ENCODE measurements at regions of chr16 and their contacts with region 1.

Region 1: DNA sequence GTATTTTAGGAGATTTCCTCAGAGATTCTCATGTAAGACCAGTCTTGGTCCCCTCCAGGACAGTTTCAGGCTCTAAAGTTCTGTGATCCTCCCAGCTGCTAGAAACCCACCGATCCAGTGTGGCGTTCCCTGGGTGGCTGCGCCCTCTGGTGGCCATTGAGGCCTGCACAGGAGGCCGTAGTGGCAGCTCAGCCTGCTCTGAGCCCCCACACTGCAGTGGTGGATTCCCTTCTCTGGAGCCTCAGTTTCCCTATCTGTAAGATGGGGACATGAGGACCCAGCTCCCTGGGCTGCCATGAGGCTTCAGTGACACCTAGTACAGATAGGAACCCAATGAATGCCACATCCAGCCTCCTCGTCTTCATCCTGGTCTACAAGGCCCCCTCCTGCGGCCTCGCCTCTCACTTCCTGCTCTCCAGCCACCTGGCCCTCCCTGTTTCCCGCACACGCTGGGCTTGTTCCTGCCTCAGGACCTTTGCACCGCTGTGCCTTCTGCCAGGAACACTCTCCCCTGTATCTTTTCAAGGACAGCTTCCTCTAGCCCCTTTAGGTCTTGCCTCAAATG is 16.5 kb downstream of the CCDC102A start:
- H3K4me3 ChIP-seq: no peak overlapping the region
- H3K27ac ChIP-seq: no peak overlapping the region
- H3K4me1 ChIP-seq: no peaks in the 10 kb centered on the region
- CTCF ChIP-seq: peak; percentile 85

Region 2: DNA sequence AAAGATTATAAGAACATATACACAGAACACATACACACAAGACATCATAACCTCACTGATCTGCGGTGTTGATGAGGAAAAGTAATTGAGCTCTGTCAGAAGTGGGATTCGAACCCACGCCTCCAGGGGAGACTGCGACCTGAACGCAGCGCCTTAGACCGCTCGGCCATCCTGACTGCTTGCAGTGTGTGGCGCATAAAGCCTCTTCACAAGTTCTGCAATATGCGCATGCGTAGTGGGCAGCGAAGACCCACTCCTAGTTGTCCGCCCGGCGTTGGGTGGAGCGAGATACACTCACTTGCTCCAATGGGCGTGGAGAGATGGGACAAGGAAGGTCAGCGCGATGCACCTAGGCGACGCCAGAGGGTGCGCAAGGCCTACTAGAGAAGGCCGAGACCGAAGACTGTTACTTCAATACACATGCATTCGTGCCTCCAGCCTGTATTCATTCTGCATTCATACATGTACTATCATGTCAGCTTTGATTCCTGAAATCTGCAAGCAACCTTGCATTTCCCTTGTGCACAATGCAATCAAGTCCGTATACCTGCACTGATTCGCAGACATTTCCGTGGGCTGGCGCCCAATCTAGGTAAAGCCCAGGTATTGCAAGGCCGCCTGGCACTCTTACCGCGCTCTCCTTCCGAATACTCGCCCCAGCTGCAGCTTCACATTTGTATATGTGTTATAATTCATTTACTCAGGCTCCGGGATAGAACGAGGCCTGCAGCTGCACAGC is 219.3 kb before region 1 on chr16:
- CTCF ChIA-PET with region 1: interaction called, 17 read pairs
- POLR2A ChIA-PET with region 1: no interaction called
- H3K4me3 ChIP-seq: peak overlapping the region; percentile 38
- H3K27ac ChIP-seq: no peak overlapping the region
- H3K4me1 ChIP-seq: no peaks in the 10 kb centered on the region
- CTCF ChIP-seq: peak; percentile 99

Region 3: GRCh38 chr16:57422026-57422944 is 97.6 kb before region 1 on chr16:
- CTCF ChIA-PET with region 1: interaction called, 86 read pairs
- POLR2A ChIA-PET with region 1: interaction called, 3 read pairs
- H3K4me3 ChIP-seq: no peak overlapping the region
- H3K27ac ChIP-seq: no peak overlapping the region
- H3K4me1 ChIP-seq: no peaks in the 10 kb centered on the region
- CTCF ChIP-seq: peak; percentile 74

Region 4: GRCh38 chr16:57475711-57476339 is 44.1 kb before region 1 on chr16:
- CTCF ChIA-PET with region 1: interaction called, 20 read pairs
- POLR2A ChIA-PET with region 1: no interaction called
- H3K4me3 ChIP-seq: no peak overlapping the region
- H3K27ac ChIP-seq: no peak overlapping the region
- H3K4me1 ChIP-seq: no peaks in the 10 kb centered on the region
- CTCF ChIP-seq: peak; percentile 92

Region 5: DNA sequence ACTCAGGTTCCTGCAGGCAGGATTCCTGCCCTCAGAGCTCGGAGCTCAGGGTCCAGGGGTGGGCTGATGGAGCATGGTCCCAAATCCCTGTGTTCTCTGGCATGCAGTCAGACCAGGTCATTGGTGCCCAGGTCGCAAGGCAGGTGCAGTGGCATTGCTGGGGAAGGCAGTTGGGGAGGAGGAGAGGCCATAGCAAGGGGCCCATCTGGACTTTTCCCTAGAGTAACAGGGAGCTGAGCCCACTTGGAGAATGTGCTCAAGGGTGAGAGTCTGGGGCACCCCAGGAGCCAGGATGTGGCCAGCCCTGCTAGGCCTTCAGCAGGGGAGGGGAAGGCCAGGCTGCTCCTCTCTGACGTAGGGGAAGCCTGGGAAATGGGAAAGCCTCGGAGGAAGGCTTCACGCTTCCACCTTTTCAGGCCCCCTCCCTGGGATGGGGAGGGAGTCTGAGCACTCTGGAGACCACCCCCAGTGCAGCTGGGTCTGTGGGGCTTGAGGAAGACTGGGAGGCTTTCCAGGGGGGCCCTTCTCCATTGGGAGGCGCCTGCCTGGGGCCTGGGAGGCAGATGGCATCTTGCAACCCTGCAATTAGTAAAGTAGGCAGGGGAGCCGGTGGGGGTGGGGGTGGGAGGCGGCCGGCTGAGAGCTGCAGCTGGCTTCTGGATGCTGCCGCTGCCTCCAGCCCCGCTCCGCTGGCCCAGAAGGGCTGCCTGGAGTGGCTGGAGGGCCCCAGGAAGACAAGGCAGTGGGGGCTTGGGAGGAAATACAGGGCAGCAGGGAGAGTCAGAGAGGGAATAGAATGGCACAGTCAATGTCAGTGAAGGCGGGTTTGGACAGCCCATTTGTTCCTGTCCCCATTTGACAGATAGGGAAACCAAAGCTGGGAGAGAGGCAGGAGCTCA is 12.5 kb before region 1 on chr16:
- CTCF ChIA-PET with region 1: interaction called, 16 read pairs
- POLR2A ChIA-PET with region 1: no interaction called
- H3K4me3 ChIP-seq: no peak overlapping the region
- H3K27ac ChIP-seq: no peak overlapping the region
- H3K4me1 ChIP-seq: no peaks in the 10 kb centered on the region
- CTCF ChIP-seq: no peak

Region 6: GRCh38 chr16:57564571-57565270 is 44.8 kb after region 1 on chr16:
- CTCF ChIA-PET with region 1: no interaction called
- POLR2A ChIA-PET with region 1: no interaction called
- H3K4me3 ChIP-seq: no peak overlapping the region
- H3K27ac ChIP-seq: no peak overlapping the region
- H3K4me1 ChIP-seq: no peaks in the 10 kb centered on the region
- CTCF ChIP-seq: no peak